HEK293 (cell line): ENCODE measurements at regions of chr1 and their contacts with region 1.

Region 1: GRCh38 chr1:204989266-204990058 is 53.5 kb upstream of the CNTN2 start:
- H3K4me3 ChIP-seq: no peak overlapping the region
- H3K27ac ChIP-seq: no peak overlapping the region
- H3K4me1 ChIP-seq: no peaks in the 10 kb centered on the region
- CTCF ChIP-seq: peak; percentile 88

Region 2: GRCh38 chr1:204902671-204903070 is 86.8 kb before region 1 on chr1:
- CTCF ChIA-PET with region 1: no interaction called
- POLR2A ChIA-PET with region 1: no interaction called
- H3K4me3 ChIP-seq: no peak overlapping the region
- H3K27ac ChIP-seq: no peak overlapping the region
- H3K4me1 ChIP-seq: no peaks in the 10 kb centered on the region
- CTCF ChIP-seq: no peak

Region 3: GRCh38 chr1:205013683-205014367 is 24.4 kb after region 1 on chr1:
- CTCF ChIA-PET with region 1: interaction called, 19 read pairs
- POLR2A ChIA-PET with region 1: no interaction called
- H3K4me3 ChIP-seq: no peak overlapping the region
- H3K27ac ChIP-seq: no peak overlapping the region
- H3K4me1 ChIP-seq: no peaks in the 10 kb centered on the region
- CTCF ChIP-seq: no peak

Region 4: DNA sequence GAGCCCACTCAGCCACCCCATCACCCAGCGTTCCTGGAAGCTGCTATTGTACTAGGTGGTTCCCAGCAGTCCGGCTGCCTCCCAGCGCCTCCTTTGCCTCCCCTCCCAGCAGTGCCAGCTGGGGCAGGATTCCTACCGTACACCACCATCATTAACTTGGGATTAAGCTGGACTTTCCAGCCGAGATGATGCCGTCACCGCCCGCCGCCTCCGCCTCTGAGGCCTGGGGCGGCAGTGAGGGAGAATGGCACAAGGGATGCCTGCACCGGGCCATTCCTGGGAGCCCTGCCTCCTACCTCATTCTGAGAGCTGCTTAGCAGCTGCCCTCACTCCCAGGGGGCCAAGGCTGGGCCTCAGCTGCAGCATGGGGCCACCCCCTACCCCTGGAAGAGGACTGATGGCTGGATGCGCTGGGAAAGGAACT is 66.7 kb after region 1 on chr1:
- CTCF ChIA-PET with region 1: interaction called, 282 read pairs
- POLR2A ChIA-PET with region 1: interaction called, 5 read pairs
- H3K4me3 ChIP-seq: no peak overlapping the region
- H3K27ac ChIP-seq: no peak overlapping the region
- H3K4me1 ChIP-seq: no peaks in the 10 kb centered on the region
- CTCF ChIP-seq: no peak

Region 5: GRCh38 chr1:205141236-205142101 is 152.0 kb after region 1 on chr1:
- CTCF ChIA-PET with region 1: interaction called, 24 read pairs
- POLR2A ChIA-PET with region 1: no interaction called
- H3K4me3 ChIP-seq: no peak overlapping the region
- H3K27ac ChIP-seq: no peak overlapping the region
- H3K4me1 ChIP-seq: no peaks in the 10 kb centered on the region
- CTCF ChIP-seq: peak; percentile 67